Transverse colon (tissue), 4 donors: ENCODE measurements at regions of chr19 and their contacts with region 1.

Region 1: DNA sequence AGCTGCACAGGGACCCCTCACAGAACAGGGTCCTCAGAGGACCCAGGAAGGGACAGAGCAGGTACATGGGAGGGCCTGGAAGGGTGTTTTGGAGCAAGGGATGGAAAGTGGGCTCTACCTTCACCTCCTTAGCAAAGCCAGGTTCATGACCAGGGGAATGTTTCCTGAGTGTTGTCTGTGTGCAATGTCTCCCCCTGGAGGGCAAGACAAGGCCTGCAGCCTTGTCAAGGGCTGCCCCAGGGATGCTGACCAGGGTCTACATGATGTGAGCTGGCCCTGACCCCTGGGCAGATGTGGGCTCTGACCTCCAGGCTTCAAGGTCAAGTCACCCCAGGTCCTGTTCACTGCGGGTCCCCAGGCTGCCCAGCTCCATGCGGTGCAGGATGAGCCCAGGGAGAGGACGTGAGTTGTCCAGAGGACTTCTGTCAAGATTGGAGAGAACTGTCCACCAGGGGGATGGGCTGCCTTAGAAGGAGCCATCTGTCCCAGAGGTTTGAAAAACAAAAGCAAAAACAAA is 1.0 kb upstream of the CEACAM1 start:
- DNase-seq: peak; percentile 83
- H3K4me3 ChIP-seq: peak overlapping the region in 2 of 4 donors; percentile 21 to 53
- H3K27ac ChIP-seq: peak overlapping the region; percentile 78 to 88 (median 85)
- H3K4me1 ChIP-seq: peaks cover 6 to 17% (median 10%) of the 10 kb centered on the region in 4 donors
- H3K27me3 ChIP-seq: no peaks in the 10 kb centered on the region
- CTCF ChIP-seq: peak; percentile 82 to 97 (median 92)
- EP300 ChIP-seq: no peak
- POLR2A ChIP-seq: no peak

Region 2: DNA sequence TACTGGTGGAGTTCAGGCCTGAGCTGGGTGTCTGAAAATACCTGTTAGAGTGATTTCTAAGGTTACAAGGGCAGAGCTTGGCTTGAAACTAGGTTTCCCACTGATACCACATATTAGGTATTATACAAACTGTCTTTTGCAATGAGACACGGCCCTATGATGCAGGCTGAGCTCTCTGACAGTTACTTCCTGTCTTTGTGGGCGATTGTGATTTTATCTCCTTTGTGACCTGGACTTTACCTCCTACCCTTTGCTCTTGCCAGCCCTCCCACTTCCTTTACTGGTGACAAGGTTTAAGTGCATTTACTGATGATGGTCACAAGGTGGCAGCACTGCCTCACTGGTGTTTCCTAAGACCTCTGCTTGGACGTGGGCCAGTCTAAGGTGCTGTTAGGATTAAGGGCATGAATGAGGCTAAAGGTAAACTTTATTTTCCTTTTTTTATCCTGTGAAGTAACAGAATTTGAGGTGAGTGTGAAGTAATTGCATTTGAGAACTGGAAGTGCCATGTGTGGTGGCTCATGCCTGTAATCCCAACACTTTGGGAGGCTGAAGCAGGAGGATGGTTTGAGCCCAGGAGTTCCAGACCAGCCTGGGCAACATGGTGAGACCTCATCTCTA is 78.9 kb before region 1 on chr19:
- in situ Hi-C with region 1: loop called (anchors 5 to 10 kb)
- intact Hi-C with region 1: loop called (anchors 1 kb)
- DNase-seq: peak; percentile 92
- H3K4me3 ChIP-seq: no peak overlapping the region
- H3K27ac ChIP-seq: peak overlapping the region; percentile 51 to 69 (median 58)
- H3K4me1 ChIP-seq: peaks cover 0 to 37% (median 13%) of the 10 kb centered on the region in 4 donors
- H3K27me3 ChIP-seq: no peaks in the 10 kb centered on the region
- CTCF ChIP-seq: peak; percentile 80 to 98 (median 82)
- EP300 ChIP-seq: no peak
- POLR2A ChIP-seq: no peak